OCI-LY7 (cell line): ENCODE measurements at regions of chr7 and their contacts with region 1.

Region 1: GRCh38 chr7:32115831-32116230 is 45.6 kb upstream of the PDE1C start:
- DNase-seq: no peak
- H3K4me3 ChIP-seq: no peak overlapping the region
- H3K27ac ChIP-seq: no peak overlapping the region
- H3K4me1 ChIP-seq: no peaks in the 10 kb centered on the region
- CTCF ChIP-seq: no peak

Region 2: DNA sequence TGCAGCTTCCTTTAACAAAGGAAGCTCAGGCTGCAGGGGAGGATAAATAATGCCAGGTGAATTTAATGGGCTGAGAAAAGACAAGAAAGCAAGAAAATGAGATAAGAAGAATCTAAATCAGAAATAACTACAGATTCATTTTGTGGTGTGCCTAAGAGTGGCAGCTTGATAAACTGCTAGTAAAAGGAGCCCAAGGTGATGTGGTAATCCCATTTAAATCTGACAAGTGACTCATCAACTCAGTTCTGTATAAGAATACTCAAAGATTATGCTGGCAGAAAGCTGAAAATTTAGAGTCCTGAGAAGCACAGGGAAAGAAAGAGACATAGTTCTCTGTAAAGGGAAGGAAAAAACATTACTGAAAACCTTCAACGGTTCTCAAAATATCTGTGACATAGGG is 63.7 kb after region 1 on chr7:
- CTCF ChIA-PET with region 1: no interaction called
- POLR2A ChIA-PET with region 1: no interaction called
- intact Hi-C with region 1: loop called (anchors 10 kb)
- DNase-seq: no peak
- H3K4me3 ChIP-seq: no peak overlapping the region
- H3K27ac ChIP-seq: no peak overlapping the region
- H3K4me1 ChIP-seq: no peaks in the 10 kb centered on the region
- CTCF ChIP-seq: no peak